Common myeloid progenitor, CD34-positive (primary cell): ENCODE measurements at regions of chr12 and their contacts with region 1.

Region 1: DNA sequence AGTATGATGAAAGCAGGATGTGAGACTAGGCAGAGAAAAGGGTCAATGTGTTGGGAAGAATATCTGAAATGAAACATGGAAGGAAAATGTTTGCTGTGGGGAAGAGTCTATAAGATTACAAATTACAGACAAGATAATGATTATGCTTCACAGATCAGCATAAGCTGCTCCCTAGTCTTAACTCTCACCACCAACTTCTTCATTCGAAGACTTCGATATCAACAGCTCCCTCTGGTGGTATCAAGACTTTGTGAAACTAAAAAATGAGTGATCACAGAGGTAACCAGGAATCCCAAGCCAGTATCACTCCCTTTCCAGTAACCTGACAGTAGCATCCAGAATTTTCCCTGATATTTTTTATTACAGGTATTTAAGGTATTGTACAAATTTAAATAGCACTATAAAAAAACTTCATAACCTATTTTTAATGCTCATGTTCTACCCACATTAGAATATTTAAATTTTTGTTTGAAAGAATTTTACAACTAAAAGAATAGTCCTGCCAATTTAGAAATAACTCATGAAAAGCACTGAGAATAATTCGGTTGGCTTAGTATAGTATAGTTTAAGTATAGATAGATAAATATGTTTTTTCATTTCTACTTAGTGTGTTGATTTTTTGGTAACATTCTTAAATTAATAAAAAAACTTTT is 84.4 kb downstream of the C2CD5 start:
- DNase-seq: peak; percentile 39 to 70 (median 64)
- H3K4me3 ChIP-seq: no peak overlapping the region
- H3K27ac ChIP-seq: no peak overlapping the region
- H3K4me1 ChIP-seq: no peaks in the 10 kb centered on the region
- H3K27me3 ChIP-seq: no peaks in the 10 kb centered on the region

Region 2: DNA sequence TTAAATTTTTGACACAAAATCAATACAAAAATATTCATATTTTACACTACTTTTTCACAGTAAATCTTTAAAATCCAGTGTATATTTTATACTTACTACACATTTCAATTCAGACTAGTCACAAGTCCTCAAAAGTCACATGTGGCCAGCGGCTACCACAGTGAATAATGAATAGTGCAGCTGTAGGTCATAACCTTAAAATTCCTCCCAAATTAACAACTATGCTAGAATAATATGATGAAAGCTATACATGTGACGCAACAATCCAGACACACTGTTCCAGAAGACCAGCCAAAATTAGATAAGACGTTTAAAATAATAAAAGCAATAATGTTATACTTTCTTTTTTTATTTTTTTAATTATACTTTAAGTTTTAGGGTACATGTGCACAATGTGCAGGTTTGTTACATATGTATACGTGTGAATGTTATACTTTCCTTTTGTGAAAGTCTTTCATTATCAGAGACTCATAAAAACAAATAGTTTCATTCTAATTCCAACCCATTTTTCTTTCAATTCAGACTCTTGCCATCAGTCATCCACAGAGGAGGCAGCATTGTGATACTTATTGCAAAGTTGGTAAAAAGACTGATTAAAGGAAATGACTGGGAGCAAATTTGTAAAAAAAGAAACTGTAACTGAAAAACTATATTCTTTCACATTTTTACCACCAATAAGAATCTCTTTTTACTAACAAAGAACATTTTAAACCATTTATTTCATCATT is 17.4 kb after region 1 on chr12:
- CTCF ChIA-PET with region 1: interaction called, 18 read pairs
- POLR2A ChIA-PET with region 1: no interaction called
- DNase-seq: no peak
- H3K4me3 ChIP-seq: no peak overlapping the region
- H3K27ac ChIP-seq: no peak overlapping the region
- H3K4me1 ChIP-seq: no peaks in the 10 kb centered on the region
- H3K27me3 ChIP-seq: no peaks in the 10 kb centered on the region